SK-N-SH (cell line): ENCODE measurements at regions of chr6 and their contacts with region 1.

Region 1: GRCh38 chr6:166775180-166776081 is 148.4 kb upstream of the RPS6KA2 start:
- DNase-seq: peak; percentile 75
- H3K4me3 ChIP-seq: no peak overlapping the region
- H3K27ac ChIP-seq: no peak overlapping the region
- H3K4me1 ChIP-seq: peaks cover 0 to 3% of the 10 kb centered on the region in 2 experiments; a peak in 1 of 4 replicates
- H3K27me3 ChIP-seq: no peaks in the 10 kb centered on the region
- CTCF ChIP-seq: peak; percentile 89
- EP300 ChIP-seq: no peak
- RAD21 ChIP-seq: peak; percentile 90

Region 2: DNA sequence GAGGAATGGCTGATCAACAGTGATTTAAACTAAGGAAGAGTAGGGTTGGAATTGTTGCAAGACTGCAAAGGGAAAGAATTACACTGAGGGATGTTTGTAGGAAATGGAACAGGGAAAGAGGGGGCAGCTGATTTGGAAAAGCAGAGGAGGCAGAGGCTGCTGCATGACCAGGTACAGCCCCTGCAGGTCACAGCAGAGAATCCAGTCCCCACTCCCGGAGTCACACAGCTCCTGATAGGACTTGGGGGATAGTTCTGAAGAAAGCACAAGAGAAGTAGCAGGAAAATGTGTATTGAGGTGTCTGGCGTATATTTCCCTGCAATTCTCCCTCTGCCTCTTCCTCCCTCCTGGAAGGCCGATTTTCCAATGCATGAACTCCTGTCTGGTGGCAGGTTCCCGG is 1019.8 kb before region 1 on chr6:
- CTCF ChIA-PET with region 1: no interaction called
- POLR2A ChIA-PET with region 1: no interaction called
- DNase-seq: no peak
- H3K4me3 ChIP-seq: no peak overlapping the region
- H3K27ac ChIP-seq: no peak overlapping the region
- H3K4me1 ChIP-seq: no peaks in the 10 kb centered on the region
- H3K27me3 ChIP-seq: no peaks in the 10 kb centered on the region
- CTCF ChIP-seq: no peak
- EP300 ChIP-seq: no peak
- RAD21 ChIP-seq: no peak

Region 3: GRCh38 chr6:166757232-166758135 is 17.9 kb before region 1 on chr6:
- CTCF ChIA-PET with region 1: interaction called, 25 read pairs
- POLR2A ChIA-PET with region 1: no interaction called
- DNase-seq: peak; percentile 60
- H3K4me3 ChIP-seq: no peak overlapping the region
- H3K27ac ChIP-seq: no peak overlapping the region
- H3K4me1 ChIP-seq: peaks cover 0 to 12% of the 10 kb centered on the region in 2 experiments; a peak in 1 of 4 replicates
- H3K27me3 ChIP-seq: no peaks in the 10 kb centered on the region; the same call in 1 of the 2 replicates
- CTCF ChIP-seq: no peak
- EP300 ChIP-seq: no peak
- RAD21 ChIP-seq: no peak

Region 4: DNA sequence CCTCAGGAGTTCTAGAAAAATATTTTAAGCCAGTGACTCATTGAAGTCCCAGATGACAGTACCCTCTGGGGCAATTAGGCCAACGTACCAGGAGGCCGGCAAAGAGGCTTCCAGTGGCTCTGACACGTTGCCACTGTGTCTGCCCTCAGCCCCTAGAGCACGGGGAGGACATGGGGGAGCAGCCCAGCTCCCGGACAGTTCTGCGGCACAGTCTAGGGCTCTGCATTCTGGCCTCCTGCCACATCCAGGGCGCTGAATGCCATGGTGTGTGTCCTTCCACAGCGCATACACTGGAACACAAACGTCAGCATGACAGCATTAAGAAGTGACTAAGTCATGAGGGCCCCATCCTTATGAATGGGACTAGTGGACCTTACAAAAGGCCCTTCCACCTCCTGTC is 24.7 kb after region 1 on chr6:
- CTCF ChIA-PET with region 1: interaction called, 13 read pairs
- POLR2A ChIA-PET with region 1: no interaction called
- DNase-seq: no peak
- H3K4me3 ChIP-seq: no peak overlapping the region
- H3K27ac ChIP-seq: no peak overlapping the region
- H3K4me1 ChIP-seq: peaks cover 0 to 2% of the 10 kb centered on the region in 2 experiments; a peak in 1 of 4 replicates
- H3K27me3 ChIP-seq: no peaks in the 10 kb centered on the region
- CTCF ChIP-seq: no peak
- EP300 ChIP-seq: no peak
- RAD21 ChIP-seq: no peak

Region 5: GRCh38 chr6:166814390-166814789 is 39.0 kb after region 1 on chr6:
- CTCF ChIA-PET with region 1: no interaction called
- POLR2A ChIA-PET with region 1: no interaction called
- DNase-seq: no peak
- H3K4me3 ChIP-seq: no peak overlapping the region
- H3K27ac ChIP-seq: no peak overlapping the region
- H3K4me1 ChIP-seq: peaks cover 0 to 6% of the 10 kb centered on the region in 2 experiments; a peak in 1 of 4 replicates
- H3K27me3 ChIP-seq: no peaks in the 10 kb centered on the region
- CTCF ChIP-seq: no peak
- EP300 ChIP-seq: no peak
- RAD21 ChIP-seq: no peak

Region 6: DNA sequence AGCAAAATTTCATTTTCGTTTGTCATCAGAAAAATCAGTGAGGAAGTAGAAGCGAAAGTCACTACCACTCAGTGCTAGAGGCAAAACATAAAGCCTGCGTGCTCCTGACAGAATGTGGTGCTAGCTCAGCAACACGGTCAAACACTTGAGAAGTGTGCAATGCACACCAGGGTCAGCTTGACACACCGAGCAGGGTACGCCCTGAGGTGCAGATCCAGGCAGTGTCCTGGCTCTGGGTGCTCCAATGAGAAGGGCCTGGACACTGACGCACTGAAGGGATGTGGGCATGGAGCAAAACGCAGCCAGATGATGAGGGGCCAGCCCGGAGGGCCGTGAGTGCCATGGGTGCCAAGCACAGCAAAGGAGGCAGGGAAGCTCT is 175.0 kb after region 1 on chr6:
- CTCF ChIA-PET with region 1: interaction called, 24 read pairs
- POLR2A ChIA-PET with region 1: no interaction called
- DNase-seq: no peak
- H3K4me3 ChIP-seq: no peak overlapping the region
- H3K27ac ChIP-seq: no peak overlapping the region
- H3K4me1 ChIP-seq: peaks cover 0 to 4% of the 10 kb centered on the region in 2 experiments; a peak in 1 of 4 replicates
- H3K27me3 ChIP-seq: no peaks in the 10 kb centered on the region
- CTCF ChIP-seq: no peak
- EP300 ChIP-seq: no peak
- RAD21 ChIP-seq: no peak

Region 7: DNA sequence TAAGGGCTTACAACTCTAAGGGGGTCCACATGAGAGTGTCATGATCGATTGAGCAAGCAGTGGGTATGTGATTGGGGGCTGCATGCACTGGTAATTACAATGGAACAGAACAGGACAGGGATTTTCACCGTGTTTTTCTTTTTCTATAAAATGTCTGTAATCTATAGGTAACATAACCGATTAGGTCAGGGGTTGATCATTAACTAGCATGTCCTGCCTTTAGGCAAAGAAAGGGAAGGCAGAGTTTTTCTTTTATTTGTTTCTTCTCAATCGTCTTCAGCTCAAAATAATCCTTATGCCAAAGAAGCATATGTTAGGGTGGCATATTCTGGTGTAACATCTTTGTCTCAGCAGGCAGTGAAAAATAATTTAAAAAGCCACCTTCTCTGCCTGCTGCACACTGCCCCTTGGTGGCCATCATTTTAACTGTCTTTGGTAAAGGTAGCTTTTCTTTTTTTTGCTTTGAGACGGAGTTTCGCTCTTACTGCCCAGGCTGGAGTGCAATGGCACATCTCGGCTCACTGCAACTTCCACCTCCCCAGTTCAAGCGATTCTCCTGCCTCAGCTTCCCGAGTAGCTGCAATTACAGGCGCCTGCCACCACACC is 214.1 kb after region 1 on chr6:
- CTCF ChIA-PET with region 1: interaction called, 45 read pairs
- POLR2A ChIA-PET with region 1: interaction called, 3 read pairs
- DNase-seq: peak; percentile 34
- H3K4me3 ChIP-seq: no peak overlapping the region; a peak in 1 of 4 replicates
- H3K27ac ChIP-seq: no peak overlapping the region
- H3K4me1 ChIP-seq: peaks cover 0 to 9% of the 10 kb centered on the region in 2 experiments; a peak in 1 of 4 replicates
- H3K27me3 ChIP-seq: no peaks in the 10 kb centered on the region
- CTCF ChIP-seq: peak; percentile 55
- EP300 ChIP-seq: no peak
- RAD21 ChIP-seq: peak; percentile 70

Region 8: GRCh38 chr6:167058261-167058660 is 282.8 kb after region 1 on chr6:
- CTCF ChIA-PET with region 1: no interaction called
- POLR2A ChIA-PET with region 1: no interaction called
- DNase-seq: no peak
- H3K4me3 ChIP-seq: no peak overlapping the region
- H3K27ac ChIP-seq: no peak overlapping the region
- H3K4me1 ChIP-seq: no peaks in the 10 kb centered on the region
- H3K27me3 ChIP-seq: no peaks in the 10 kb centered on the region
- CTCF ChIP-seq: no peak
- EP300 ChIP-seq: no peak
- RAD21 ChIP-seq: no peak

Region 9: GRCh38 chr6:167146977-167147376 is 371.5 kb after region 1 on chr6:
- CTCF ChIA-PET with region 1: interaction called, 79 read pairs
- POLR2A ChIA-PET with region 1: no interaction called
- DNase-seq: no peak
- H3K4me3 ChIP-seq: no peak overlapping the region
- H3K27ac ChIP-seq: no peak overlapping the region
- H3K4me1 ChIP-seq: peaks cover 0 to 1% of the 10 kb centered on the region in 2 experiments; a peak in 1 of 4 replicates
- H3K27me3 ChIP-seq: no peaks in the 10 kb centered on the region
- CTCF ChIP-seq: no peak
- EP300 ChIP-seq: no peak
- RAD21 ChIP-seq: no peak